B cell (primary cell): ENCODE measurements at regions of chr11 and their contacts with region 1.

Region 1: DNA sequence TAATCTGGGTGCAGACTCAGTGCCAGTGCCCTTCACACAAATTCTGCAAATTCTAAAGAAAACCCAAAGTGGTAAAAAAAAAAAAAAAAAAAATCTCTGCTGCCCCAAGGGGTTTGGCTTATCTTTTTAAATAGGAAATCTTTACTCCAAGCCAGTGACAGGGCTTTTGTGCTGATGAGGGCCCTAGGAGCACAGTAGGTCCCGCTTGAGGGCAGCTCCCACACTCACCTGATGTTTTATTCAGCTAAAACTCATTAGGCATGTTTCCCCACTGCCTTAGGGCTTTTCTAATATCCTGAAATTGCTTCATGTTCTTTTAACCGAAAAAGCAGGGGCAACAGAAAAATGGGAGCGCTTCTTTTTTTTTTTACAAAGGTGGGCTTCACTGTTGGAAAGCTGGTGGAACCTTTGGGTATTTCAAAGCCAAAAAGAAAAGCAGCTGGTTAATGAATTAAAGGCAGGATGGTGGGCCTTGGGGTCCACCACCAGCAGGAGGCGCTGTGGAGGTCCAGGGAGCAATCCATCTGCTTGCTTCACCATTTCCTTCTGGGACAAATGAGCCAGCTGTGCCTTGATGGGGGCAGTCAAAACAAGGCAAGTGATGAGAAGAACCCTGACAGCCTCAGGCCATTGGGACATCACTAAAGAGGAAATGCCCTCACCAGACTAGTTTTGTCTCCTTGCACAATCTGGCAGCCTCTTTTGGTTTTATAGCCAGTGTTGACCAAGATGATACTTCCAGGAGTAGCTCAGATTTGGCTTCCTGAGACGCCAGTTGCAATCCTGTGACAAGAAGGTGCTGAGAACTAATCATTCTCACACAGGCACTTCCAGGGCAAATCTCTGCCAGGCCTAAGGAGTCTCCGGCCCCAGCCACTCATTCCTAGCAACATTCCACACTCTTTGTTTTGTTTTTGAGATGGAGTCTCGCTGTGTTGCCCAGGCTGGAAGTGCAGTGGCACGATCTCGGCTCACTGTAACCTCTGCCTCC is 38.4 kb upstream of the WEE1 start:
- DNase-seq: peak; percentile 83
- ATAC-seq: peak; percentile 53
- H3K4me3 ChIP-seq: no peak overlapping the region
- H3K4me3 Mint-ChIP-seq: no peak overlapping the region
- H3K27ac ChIP-seq: no peak overlapping the region
- H3K27ac Mint-ChIP-seq: no peak overlapping the region
- H3K4me1 ChIP-seq: peaks cover 0 to 10% of the 10 kb centered on the region in 2 donors
- H3K4me1 Mint-ChIP-seq: peaks cover 2% of the 10 kb centered on the region
- H3K27me3 ChIP-seq: no peaks in the 10 kb centered on the region
- H3K27me3 Mint-ChIP-seq: no peaks in the 10 kb centered on the region
- CTCF ChIP-seq: peak; percentile 93

Region 2: GRCh38 chr11:9470765-9471164 is 64.3 kb before region 1 on chr11:
- CTCF ChIA-PET with region 1: no interaction called
- POLR2A ChIA-PET with region 1: no interaction called
- intact Hi-C with region 1: no loop called
- DNase-seq: no peak
- ATAC-seq: no peak
- H3K4me3 ChIP-seq: no peak overlapping the region
- H3K4me3 Mint-ChIP-seq: no peak overlapping the region
- H3K27ac ChIP-seq: no peak overlapping the region
- H3K27ac Mint-ChIP-seq: no peak overlapping the region
- H3K4me1 ChIP-seq: no peaks in the 10 kb centered on the region
- H3K4me1 Mint-ChIP-seq: peaks cover 9% of the 10 kb centered on the region
- H3K27me3 ChIP-seq: no peaks in the 10 kb centered on the region
- H3K27me3 Mint-ChIP-seq: no peaks in the 10 kb centered on the region
- CTCF ChIP-seq: no peak

Region 3: GRCh38 chr11:9573052-9573774 is 38.1 kb after region 1 on chr11 and contains the start of gene WEE1:
- CTCF ChIA-PET with region 1: interaction called, 43 read pairs
- POLR2A ChIA-PET with region 1: interaction called, 3 read pairs
- intact Hi-C with region 1: loop called (anchors 2 kb)
- DNase-seq: peak; percentile 97
- ATAC-seq: peak; percentile 87
- H3K4me3 ChIP-seq: peak within 1 kb of the TSS; percentile 52 to 96 (median 90)
- H3K4me3 Mint-ChIP-seq: peak within 1 kb of the TSS; percentile 97
- H3K27ac ChIP-seq: peak within 1 kb of the TSS; percentile 83 to 89
- H3K27ac Mint-ChIP-seq: peak within 1 kb of the TSS; percentile 94
- H3K4me1 ChIP-seq: peaks cover 51 to 55% of the 10 kb centered on the region in 2 donors
- H3K4me1 Mint-ChIP-seq: peaks cover 64% of the 10 kb centered on the region
- H3K27me3 ChIP-seq: no peaks in the 10 kb centered on the region
- H3K27me3 Mint-ChIP-seq: no peaks in the 10 kb centered on the region
- CTCF ChIP-seq: no peak
- total RNA-seq, gene WEE1: 31.2 and 31.3 TPM in 2 replicates

Region 4: GRCh38 chr11:9601037-9601875 is 66.2 kb after region 1 on chr11:
- CTCF ChIA-PET with region 1: interaction called, 44 read pairs
- POLR2A ChIA-PET with region 1: no interaction called
- intact Hi-C with region 1: no loop called
- DNase-seq: peak; percentile 89
- ATAC-seq: peak; percentile 80
- H3K4me3 ChIP-seq: peak overlapping the region; percentile 26 to 52 (median 44)
- H3K4me3 Mint-ChIP-seq: peak overlapping the region; percentile 79
- H3K27ac ChIP-seq: peak overlapping the region; percentile 82 to 85
- H3K27ac Mint-ChIP-seq: peak overlapping the region; percentile 87
- H3K4me1 ChIP-seq: peaks cover 36 to 45% of the 10 kb centered on the region in 2 donors
- H3K4me1 Mint-ChIP-seq: peaks cover 51% of the 10 kb centered on the region
- H3K27me3 ChIP-seq: no peaks in the 10 kb centered on the region
- H3K27me3 Mint-ChIP-seq: no peaks in the 10 kb centered on the region
- CTCF ChIP-seq: no peak

Region 5: DNA sequence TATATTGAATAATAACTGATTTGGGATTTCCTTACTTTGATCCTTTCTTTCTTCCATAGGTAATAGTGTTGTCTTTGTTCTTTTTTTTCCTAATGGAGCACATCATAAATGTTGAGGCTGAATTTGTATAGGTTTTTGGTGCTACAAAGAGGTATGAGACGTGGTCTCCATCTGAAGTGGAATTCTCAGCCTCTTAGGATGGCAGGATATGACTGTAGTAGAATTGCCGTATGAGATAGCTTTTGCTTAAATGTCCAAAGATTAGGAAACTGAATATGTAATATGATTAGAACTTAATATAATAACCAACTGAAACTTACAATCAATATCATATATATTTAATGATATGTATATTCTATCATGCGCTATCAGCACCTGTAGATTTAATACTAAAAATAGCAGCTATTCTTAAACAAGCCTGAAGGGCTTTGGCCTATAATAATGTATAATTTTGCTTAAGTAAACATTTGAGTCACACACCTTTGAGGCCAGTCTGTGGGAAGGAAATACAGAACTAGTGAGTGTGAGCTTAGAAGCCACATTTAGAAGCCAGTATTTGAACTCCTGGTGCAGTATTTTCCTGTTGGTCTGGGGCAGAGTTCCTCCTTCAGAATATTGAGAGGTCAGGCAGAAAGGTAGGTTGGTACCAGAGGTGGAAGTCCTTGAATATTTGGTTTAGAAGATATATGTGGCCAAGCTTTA is 191.4 kb after region 1 on chr11:
- CTCF ChIA-PET with region 1: interaction called, 10 read pairs
- POLR2A ChIA-PET with region 1: no interaction called
- intact Hi-C with region 1: no loop called
- DNase-seq: no peak
- ATAC-seq: peak; percentile 34
- H3K4me3 ChIP-seq: no peak overlapping the region
- H3K4me3 Mint-ChIP-seq: peak overlapping the region; percentile 65
- H3K27ac ChIP-seq: peak overlapping the region; percentile 14 to 86
- H3K27ac Mint-ChIP-seq: peak overlapping the region; percentile 87
- H3K4me1 ChIP-seq: peaks cover 68 to 76% of the 10 kb centered on the region in 2 donors
- H3K4me1 Mint-ChIP-seq: peaks cover 74% of the 10 kb centered on the region
- H3K27me3 ChIP-seq: no peaks in the 10 kb centered on the region
- H3K27me3 Mint-ChIP-seq: no peaks in the 10 kb centered on the region
- CTCF ChIP-seq: no peak

Region 6: GRCh38 chr11:9972989-9973388 is 437.9 kb after region 1 on chr11:
- CTCF ChIA-PET with region 1: interaction called, 18 read pairs
- POLR2A ChIA-PET with region 1: no interaction called
- intact Hi-C with region 1: no loop called
- DNase-seq: peak; percentile 70
- ATAC-seq: peak; percentile 76
- H3K4me3 ChIP-seq: no peak overlapping the region
- H3K4me3 Mint-ChIP-seq: no peak overlapping the region
- H3K27ac ChIP-seq: no peak overlapping the region
- H3K27ac Mint-ChIP-seq: no peak overlapping the region
- H3K4me1 ChIP-seq: peaks cover 0 to 3% of the 10 kb centered on the region in 2 donors
- H3K4me1 Mint-ChIP-seq: peaks cover 4% of the 10 kb centered on the region
- H3K27me3 ChIP-seq: no peaks in the 10 kb centered on the region
- H3K27me3 Mint-ChIP-seq: no peaks in the 10 kb centered on the region
- CTCF ChIP-seq: peak; percentile 88